ENCODE measurements at regions of chr21 and their contacts with region 1.

Region 1: DNA sequence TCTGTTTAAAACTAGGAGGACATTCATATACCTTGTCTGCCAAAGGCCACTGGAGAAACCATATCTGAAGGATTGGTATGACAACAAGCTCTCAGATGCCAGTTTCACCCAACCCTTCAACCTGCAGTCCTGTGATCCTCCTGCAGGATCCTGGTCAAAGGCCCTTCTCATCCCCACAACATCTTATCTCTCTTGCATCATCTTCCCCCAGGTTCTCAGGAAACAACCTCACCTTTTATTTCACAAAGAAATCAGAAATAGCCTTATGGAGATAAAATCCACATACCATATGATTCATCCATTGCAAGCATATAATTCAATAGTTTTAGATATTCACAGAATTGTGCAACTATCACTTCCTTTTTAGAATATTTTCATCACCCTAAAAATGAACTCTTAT is 104.0 kb upstream of the DSCAM start:
- DNase-seq: no peak
- ATAC-seq: no peak

Region 2: DNA sequence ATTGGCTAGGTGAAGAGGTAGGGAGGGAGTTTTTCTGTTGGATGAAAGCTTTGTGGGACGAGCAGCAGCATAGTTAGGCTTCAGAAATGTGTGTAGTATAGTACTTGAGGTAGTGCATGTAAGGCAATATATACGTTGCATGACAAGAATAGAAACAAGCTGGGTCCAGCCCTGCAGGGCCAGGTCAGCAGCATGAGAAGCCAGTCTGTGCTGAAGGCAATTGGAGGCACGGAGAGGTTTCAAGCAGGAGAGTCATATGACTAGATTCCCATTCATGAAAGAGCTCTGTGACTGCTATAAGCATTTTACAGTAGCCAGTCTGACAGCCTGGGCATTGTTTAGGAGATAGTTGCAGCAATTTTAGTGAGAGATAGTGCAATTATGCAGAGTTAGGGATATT is 19.8 kb before region 1 on chr21:
- intact Hi-C with region 1: loop called (anchors 2 kb)
- DNase-seq: no peak
- ATAC-seq: no peak

Region 3: DNA sequence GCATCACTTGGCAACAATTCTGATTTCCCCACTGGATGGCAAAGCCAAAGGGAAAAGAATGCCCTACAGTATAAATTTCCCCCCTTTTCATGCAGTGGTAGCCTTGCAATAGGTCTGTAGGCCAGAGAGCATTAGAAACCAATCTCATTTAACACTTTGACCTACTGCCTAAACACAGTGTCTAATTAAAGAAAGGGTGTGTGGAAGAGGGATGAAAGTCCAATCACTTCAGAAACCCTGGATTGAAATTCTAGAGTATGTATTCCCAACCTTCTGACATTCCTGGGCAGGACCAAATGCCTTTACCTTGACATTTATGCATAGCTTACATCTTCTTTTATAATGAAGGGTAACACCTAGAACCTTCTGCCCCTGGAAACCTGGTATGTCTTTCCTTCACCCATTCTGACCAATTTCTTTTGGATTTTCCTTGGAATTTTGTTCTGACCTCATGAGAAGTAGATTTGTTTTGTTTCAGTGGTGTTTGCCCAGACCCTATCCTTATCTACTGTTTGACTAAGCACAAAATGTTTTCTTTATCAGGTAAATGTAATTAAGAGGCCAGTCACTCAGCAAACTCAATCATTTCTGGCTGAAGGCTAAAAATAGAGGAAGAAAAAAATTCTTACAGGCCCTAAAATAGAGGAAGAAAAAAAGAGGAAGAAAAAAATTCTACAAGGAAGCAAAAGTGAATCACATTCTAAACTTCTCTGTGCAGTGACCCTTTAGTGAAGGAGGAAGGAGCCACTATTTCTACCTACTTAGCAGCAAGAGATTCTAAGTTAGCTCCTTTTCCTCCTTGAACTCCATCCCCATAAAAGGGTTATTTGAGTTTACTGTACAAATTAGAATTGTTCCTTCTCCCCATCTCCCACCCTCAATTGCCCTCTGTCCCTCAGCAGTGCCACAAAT is 25.5 kb after region 1 on chr21:
- intact Hi-C with region 1: no loop called
- DNase-seq: no peak
- ATAC-seq: no peak

Region 4: GRCh38 chr21:41009398-41010100 is 58.6 kb after region 1 on chr21:
- intact Hi-C with region 1: no loop called
- DNase-seq: no peak
- ATAC-seq: no peak

Measured in sciatic nerve (tissue), 2 donors.